ENCODE measurements at regions of chr3 and their contacts with region 1.

Region 1: GRCh38 chr3:98763076-98763475 is at the start of gene ST3GAL6:
- H3K4me3 Mint-ChIP-seq: peak within 1 kb of the TSS; percentile 74
- H3K27ac Mint-ChIP-seq: peak within 1 kb of the TSS; percentile 91
- H3K4me1 Mint-ChIP-seq: peaks cover 68% of the 10 kb centered on the region
- H3K27me3 Mint-ChIP-seq: no peaks in the 10 kb centered on the region

Region 2: DNA sequence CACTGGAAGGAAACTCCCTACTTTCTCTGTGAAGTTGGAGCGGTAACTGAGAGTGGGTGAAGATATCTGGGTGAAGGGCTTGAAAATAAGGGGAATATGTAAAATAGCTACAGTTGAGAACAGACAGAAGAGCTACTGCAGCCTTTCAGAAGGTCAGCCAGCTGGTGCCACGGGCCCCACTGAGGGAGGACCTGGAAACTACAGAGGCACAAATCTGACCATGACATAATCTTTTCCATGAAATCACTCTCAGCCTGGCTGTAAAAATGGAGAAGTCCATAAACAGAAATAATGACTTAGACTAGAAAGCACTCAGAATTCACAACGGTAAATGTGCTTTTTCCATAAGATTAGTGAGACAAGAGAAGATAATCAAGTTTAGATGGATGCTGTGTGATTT is 46.5 kb after region 1 on chr3:
- intact Hi-C with region 1: loop called (anchors 5 kb)
- H3K4me3 Mint-ChIP-seq: no peak overlapping the region
- H3K27ac Mint-ChIP-seq: peak overlapping the region; percentile 72
- H3K4me1 Mint-ChIP-seq: peaks cover 27% of the 10 kb centered on the region
- H3K27me3 Mint-ChIP-seq: no peaks in the 10 kb centered on the region

Region 3: DNA sequence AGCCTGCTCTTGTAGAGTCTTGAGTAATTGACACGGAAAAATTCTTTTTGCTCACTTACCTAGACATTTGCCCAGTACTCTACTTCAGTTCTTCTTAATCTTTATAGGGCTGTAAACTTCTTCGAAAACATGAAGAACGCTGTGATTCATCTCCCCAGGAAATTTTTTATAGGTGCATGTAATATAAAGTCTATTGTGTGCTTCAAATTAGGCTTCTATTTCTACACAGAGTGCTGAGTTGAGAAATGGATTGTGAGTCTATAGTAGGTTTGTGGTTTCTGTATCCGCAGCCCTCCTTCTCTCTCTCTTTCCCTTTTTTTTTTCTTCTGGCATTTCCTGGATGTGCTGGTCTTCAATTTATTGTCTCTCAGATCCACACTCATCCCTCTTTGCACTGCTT is 321.8 kb after region 1 on chr3:
- intact Hi-C with region 1: no loop called
- H3K4me3 Mint-ChIP-seq: no peak overlapping the region
- H3K27ac Mint-ChIP-seq: no peak overlapping the region
- H3K4me1 Mint-ChIP-seq: no peaks in the 10 kb centered on the region
- H3K27me3 Mint-ChIP-seq: no peaks in the 10 kb centered on the region

Measured in dendritic cell treated with granulocyte-macrophage colony-stimulating factor and Interleukin-4, amounts not matched to agents 40 ng/mL and 50 ng/mL, for 4 days (primary cell).